Psoas muscle (tissue), 8 donors: ENCODE measurements at regions of chr6 and their contacts with region 1.

Region 1: GRCh38 chr6:156686995-156687788 is 90.0 kb upstream of the ARID1B start:
- DNase-seq: peak; percentile 90 to 96
- ATAC-seq: peak; percentile 94 to 97 (median 96)
- H3K4me3 ChIP-seq: peak overlapping the region; percentile 84
- H3K27ac ChIP-seq: peak overlapping the region; percentile 96
- H3K4me1 ChIP-seq: peaks cover 11% of the 10 kb centered on the region
- H3K27me3 ChIP-seq: no peaks in the 10 kb centered on the region
- CTCF ChIP-seq: no peak

Region 2: GRCh38 chr6:155314773-155315515 is 1372.2 kb before region 1 on chr6:
- intact Hi-C with region 1: loop called in 1 of 2 experiments (anchors 5 kb)
- DNase-seq: peak; percentile 59 to 79
- ATAC-seq: peak; percentile 79 to 86 (median 80)
- H3K4me3 ChIP-seq: peak overlapping the region; percentile 84
- H3K27ac ChIP-seq: peak overlapping the region; percentile 89
- H3K4me1 ChIP-seq: peaks cover 12% of the 10 kb centered on the region
- H3K27me3 ChIP-seq: no peaks in the 10 kb centered on the region
- CTCF ChIP-seq: no peak

Region 3: DNA sequence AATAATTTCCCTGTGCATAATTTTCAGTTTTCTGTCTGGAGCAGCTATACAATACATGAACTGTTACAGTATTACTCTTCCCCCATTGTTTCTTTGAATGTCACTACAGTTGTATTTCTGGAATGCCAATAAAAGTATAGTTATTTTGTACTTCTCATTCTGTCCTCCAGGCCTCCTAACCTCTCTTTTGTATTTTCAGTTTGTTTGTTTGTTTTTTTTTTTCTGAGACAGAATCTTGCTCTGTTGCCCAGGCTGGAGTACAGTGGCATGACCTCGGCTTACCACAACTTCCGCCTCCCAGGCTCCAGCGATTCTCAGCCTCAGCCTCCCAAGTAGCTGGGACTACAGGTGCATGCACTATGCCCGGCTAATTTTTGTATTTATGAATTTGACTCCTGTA is 73.2 kb after region 1 on chr6:
- intact Hi-C with region 1: no loop called
- DNase-seq: no peak
- ATAC-seq: no peak
- H3K4me3 ChIP-seq: no peak overlapping the region
- H3K27ac ChIP-seq: no peak overlapping the region
- H3K4me1 ChIP-seq: no peaks in the 10 kb centered on the region
- H3K27me3 ChIP-seq: no peaks in the 10 kb centered on the region
- CTCF ChIP-seq: no peak

Region 4: GRCh38 chr6:156776840-156777576 is 89.8 kb after region 1 on chr6 and contains the start of gene ARID1B:
- intact Hi-C with region 1: loop called (anchors 1 kb)
- DNase-seq: peak; percentile 89 to 92
- ATAC-seq: peak; percentile 75 to 81 (median 78)
- H3K4me3 ChIP-seq: peak within 1 kb of the TSS; percentile 84
- H3K27ac ChIP-seq: peak within 1 kb of the TSS; percentile 99
- H3K4me1 ChIP-seq: peaks cover 35% of the 10 kb centered on the region
- H3K27me3 ChIP-seq: no peaks in the 10 kb centered on the region
- CTCF ChIP-seq: no peak
- total RNA-seq, gene ARID1B: 53.1 to 61.1 (median 55.8) TPM

Region 5: GRCh38 chr6:156953479-156954146 is 266.4 kb after region 1 on chr6:
- intact Hi-C with region 1: loop called in 1 of 2 experiments (anchors 10 kb)
- DNase-seq: no peak
- ATAC-seq: peak; percentile 77 to 83 (median 80)
- H3K4me3 ChIP-seq: peak overlapping the region; percentile 50
- H3K27ac ChIP-seq: peak overlapping the region; percentile 89
- H3K4me1 ChIP-seq: peaks cover 97% of the 10 kb centered on the region
- H3K27me3 ChIP-seq: no peaks in the 10 kb centered on the region
- CTCF ChIP-seq: no peak

Region 6: DNA sequence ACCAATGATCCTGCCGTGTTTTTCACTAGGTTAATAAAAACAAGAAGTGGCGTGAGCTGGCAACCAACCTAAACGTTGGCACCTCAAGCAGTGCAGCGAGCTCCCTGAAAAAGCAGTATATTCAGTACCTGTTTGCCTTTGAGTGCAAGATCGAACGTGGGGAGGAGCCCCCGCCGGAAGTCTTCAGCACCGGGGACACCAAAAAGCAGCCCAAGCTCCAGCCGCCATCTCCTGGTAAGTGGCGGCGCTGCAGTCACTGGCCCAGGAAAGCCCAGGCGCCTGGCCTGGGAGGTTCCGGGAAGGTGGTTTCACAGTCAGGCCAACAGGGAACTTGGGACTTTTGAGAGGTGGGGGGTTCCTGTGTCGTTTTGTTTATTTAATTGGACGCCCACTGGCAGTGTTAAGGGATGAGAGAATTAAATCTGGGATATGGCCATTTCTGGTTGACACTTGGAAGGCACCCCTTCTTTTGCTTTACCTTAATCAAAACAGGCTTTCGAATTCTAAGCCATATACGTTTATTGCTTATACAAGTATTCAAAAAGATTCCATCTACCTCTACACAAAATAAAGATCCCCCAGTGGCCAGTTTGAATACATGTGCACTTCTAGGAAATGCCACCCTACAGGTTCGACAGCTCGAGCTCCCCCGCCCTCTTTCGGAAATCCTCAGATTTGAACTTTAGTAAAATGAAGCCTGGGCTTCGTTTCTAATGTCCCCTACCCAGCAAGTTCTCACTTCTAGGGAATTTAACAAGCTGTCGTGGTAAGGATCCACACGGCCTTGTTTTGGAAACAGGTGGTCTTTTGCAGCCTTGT is 497.2 kb after region 1 on chr6:
- intact Hi-C with region 1: loop called in 1 of 2 experiments (anchors 10 kb)
- DNase-seq: peak; percentile 74 to 82
- ATAC-seq: peak; percentile 63 to 77 (median 75)
- H3K4me3 ChIP-seq: no peak overlapping the region
- H3K27ac ChIP-seq: peak overlapping the region; percentile 85
- H3K4me1 ChIP-seq: peaks cover 18% of the 10 kb centered on the region
- H3K27me3 ChIP-seq: no peaks in the 10 kb centered on the region
- CTCF ChIP-seq: peak; percentile 88